A673 (cell line): ENCODE measurements at regions of chr1 and their contacts with region 1.

Region 1: GRCh38 chr1:27446496-27447020 is 43.4 kb downstream of the WASF2 start:
- DNase-seq: no peak
- H3K4me3 ChIP-seq: no peak overlapping the region
- H3K27ac ChIP-seq: no peak overlapping the region
- H3K4me1 ChIP-seq: peaks cover 19% of the 10 kb centered on the region
- H3K27me3 ChIP-seq: no peaks in the 10 kb centered on the region
- CTCF ChIP-seq: no peak

Region 2: DNA sequence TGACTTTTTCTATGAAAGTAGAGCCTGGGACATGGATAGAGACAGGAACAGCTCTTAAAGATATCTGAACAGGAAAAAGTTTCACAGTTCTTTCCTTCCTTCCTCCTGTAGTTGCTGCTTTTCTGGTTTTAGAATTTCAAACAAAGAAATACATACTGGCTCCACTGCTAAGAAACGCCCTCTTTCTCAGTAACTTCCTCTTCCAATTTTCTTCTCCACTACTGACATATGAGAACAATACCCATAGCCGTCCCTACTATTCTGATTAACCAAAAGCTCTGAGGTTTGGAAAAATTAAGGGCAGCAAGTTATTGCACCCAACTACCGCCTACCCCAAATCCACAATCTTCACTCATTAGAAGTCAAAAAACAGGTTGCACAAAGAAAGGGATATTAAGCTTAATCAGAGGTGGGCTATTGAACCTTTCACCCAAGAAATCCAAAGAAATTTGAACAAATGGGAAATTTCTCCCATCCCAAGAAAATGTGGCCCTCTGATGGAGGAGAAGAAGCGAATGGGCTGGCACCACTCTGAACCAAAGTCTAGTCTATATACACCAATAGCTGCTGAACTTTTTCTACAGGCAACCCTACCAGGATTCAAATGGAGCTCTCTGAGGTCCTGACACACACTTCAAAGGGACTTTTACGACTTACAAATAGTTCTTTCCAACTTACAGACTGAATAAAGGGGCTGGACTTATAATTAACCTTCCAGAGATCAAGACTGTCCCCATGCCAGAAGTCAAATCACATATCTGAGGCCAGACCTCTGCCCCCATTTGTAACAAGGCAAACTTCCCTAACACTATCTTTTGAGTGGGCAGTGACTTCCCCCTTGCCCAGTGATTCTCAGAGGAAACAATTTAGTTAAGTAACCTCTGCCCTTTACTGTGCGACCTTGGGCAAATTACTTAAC is 41.7 kb after region 1 on chr1:
- CTCF ChIA-PET with region 1: no interaction called
- POLR2A ChIA-PET with region 1: interaction called, 22 read pairs
- intact Hi-C with region 1: no loop called
- DNase-seq: peak; percentile 57
- H3K4me3 ChIP-seq: peak overlapping the region; percentile 97
- H3K27ac ChIP-seq: peak overlapping the region; percentile 97
- H3K4me1 ChIP-seq: peaks cover 13% of the 10 kb centered on the region
- H3K27me3 ChIP-seq: no peaks in the 10 kb centered on the region
- CTCF ChIP-seq: no peak